ENCODE measurements at regions of chr7 and their contacts with region 1.

Region 1: DNA sequence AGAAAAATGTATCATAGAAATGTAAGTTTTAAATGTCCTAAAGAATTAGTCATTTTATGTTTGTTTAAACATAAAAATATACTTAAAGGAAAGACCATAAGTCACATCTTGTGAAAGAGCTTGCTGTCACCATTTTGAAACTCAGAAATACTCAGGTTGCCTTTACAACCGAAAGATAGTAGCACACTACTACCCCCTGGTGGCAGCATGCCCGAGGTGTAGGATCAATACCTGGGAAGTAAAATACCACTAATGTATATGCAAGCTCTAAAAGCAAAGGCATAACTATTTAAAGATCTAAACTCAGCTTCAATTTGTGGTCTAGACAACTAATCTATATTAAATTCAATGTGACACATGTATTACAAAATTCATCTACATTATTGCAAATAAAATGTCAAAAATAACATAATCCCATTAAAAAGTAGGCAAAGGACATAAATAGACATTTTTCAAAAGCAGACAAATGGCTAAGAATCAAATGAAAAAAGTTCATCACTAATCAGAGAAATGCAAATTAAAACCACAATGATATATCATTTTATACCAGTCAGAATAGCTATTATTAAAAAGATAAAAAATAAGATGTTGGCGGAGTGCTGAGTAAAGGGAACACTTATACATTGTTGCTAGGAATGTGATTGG is 47.7 kb upstream of the FGL2 start:
- DNase-seq: peak; percentile 82
- H3K4me3 Mint-ChIP-seq: no peak overlapping the region
- H3K27ac Mint-ChIP-seq: no peak overlapping the region
- H3K4me1 Mint-ChIP-seq: peaks cover 16% of the 10 kb centered on the region
- H3K27me3 Mint-ChIP-seq: no peaks in the 10 kb centered on the region
- CTCF ChIP-seq: peak; percentile 46

Region 2: GRCh38 chr7:77326696-77327628 is 79.6 kb after region 1 on chr7:
- CTCF ChIA-PET with region 1: interaction called, 22 read pairs
- intact Hi-C with region 1: loop called (anchors 5 kb)
- DNase-seq: peak; percentile 72
- H3K4me3 Mint-ChIP-seq: no peak overlapping the region
- H3K27ac Mint-ChIP-seq: peak overlapping the region; percentile 44
- H3K4me1 Mint-ChIP-seq: peaks cover 35% of the 10 kb centered on the region
- H3K27me3 Mint-ChIP-seq: no peaks in the 10 kb centered on the region
- CTCF ChIP-seq: no peak

Region 3: GRCh38 chr7:77331938-77332695 is 84.8 kb after region 1 on chr7:
- CTCF ChIA-PET with region 1: interaction called, 22 read pairs
- intact Hi-C with region 1: loop called (anchors 5 kb)
- DNase-seq: peak; percentile 50
- H3K4me3 Mint-ChIP-seq: no peak overlapping the region
- H3K27ac Mint-ChIP-seq: no peak overlapping the region
- H3K4me1 Mint-ChIP-seq: peaks cover 28% of the 10 kb centered on the region
- H3K27me3 Mint-ChIP-seq: no peaks in the 10 kb centered on the region
- CTCF ChIP-seq: peak; percentile 19